Activated CD8-positive, alpha-beta T cell treated with anti-CD3 and anti-CD28 coated beads for 36 hours (primary cell): ENCODE measurements at regions of chr3 and their contacts with region 1.

Region 1: GRCh38 chr3:72447059-72447946 is 400.9 kb downstream of the SHQ1 start:
- DNase-seq: peak; percentile 90
- ATAC-seq: peak; percentile 92
- H3K4me3 Mint-ChIP-seq: peak overlapping the region; percentile 50
- H3K27ac Mint-ChIP-seq: peak overlapping the region; percentile 58
- H3K4me1 Mint-ChIP-seq: peaks cover 38% of the 10 kb centered on the region
- H3K27me3 Mint-ChIP-seq: peaks cover 13% of the 10 kb centered on the region
- CTCF ChIP-seq: no peak

Region 2: GRCh38 chr3:72482589-72483321 is 35.5 kb after region 1 on chr3:
- CTCF ChIA-PET with region 1: interaction called, 3 read pairs
- POLR2A ChIA-PET with region 1: interaction called, 4 read pairs
- intact Hi-C with region 1: loop called (anchors 5 kb)
- DNase-seq: peak; percentile 94
- ATAC-seq: peak; percentile 78
- H3K4me3 Mint-ChIP-seq: peak overlapping the region; percentile 45
- H3K27ac Mint-ChIP-seq: peak overlapping the region; percentile 90
- H3K4me1 Mint-ChIP-seq: peaks cover 58% of the 10 kb centered on the region
- H3K27me3 Mint-ChIP-seq: no peaks in the 10 kb centered on the region
- CTCF ChIP-seq: no peak

Region 3: GRCh38 chr3:72582211-72582878 is 135.0 kb after region 1 on chr3:
- CTCF ChIA-PET with region 1: no interaction called
- POLR2A ChIA-PET with region 1: no interaction called
- intact Hi-C with region 1: no loop called
- DNase-seq: no peak
- ATAC-seq: no peak
- H3K4me3 Mint-ChIP-seq: no peak overlapping the region
- H3K27ac Mint-ChIP-seq: no peak overlapping the region
- H3K4me1 Mint-ChIP-seq: no peaks in the 10 kb centered on the region
- H3K27me3 Mint-ChIP-seq: peaks cover 2% of the 10 kb centered on the region
- CTCF ChIP-seq: no peak

Region 4: DNA sequence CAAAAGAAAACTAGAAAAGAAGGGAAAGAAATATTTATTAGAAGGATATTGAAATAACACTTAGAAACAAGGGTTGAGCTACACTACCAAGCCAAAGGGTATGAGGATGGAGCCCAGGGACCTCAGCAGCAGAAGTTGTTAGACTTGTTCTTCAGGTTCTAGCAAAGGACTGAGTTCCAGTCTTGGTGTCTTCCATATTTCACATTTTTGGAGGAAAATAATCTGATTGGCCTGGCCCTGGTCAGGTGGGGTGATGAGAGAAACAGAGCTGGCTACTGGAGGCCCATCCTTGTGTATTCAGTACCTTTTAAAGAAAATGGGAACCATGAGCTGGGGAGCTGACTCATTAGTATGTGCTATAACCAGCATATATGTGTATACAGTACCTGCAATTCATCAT is 577.5 kb after region 1 on chr3:
- CTCF ChIA-PET with region 1: no interaction called
- POLR2A ChIA-PET with region 1: no interaction called
- intact Hi-C with region 1: no loop called
- DNase-seq: no peak
- ATAC-seq: no peak
- H3K4me3 Mint-ChIP-seq: no peak overlapping the region
- H3K27ac Mint-ChIP-seq: no peak overlapping the region
- H3K4me1 Mint-ChIP-seq: peaks cover 76% of the 10 kb centered on the region
- H3K27me3 Mint-ChIP-seq: no peaks in the 10 kb centered on the region
- CTCF ChIP-seq: no peak